Naive thymus-derived CD4-positive, alpha-beta T cell (primary cell): ENCODE measurements at regions of chr6 and their contacts with region 1.

Region 1: DNA sequence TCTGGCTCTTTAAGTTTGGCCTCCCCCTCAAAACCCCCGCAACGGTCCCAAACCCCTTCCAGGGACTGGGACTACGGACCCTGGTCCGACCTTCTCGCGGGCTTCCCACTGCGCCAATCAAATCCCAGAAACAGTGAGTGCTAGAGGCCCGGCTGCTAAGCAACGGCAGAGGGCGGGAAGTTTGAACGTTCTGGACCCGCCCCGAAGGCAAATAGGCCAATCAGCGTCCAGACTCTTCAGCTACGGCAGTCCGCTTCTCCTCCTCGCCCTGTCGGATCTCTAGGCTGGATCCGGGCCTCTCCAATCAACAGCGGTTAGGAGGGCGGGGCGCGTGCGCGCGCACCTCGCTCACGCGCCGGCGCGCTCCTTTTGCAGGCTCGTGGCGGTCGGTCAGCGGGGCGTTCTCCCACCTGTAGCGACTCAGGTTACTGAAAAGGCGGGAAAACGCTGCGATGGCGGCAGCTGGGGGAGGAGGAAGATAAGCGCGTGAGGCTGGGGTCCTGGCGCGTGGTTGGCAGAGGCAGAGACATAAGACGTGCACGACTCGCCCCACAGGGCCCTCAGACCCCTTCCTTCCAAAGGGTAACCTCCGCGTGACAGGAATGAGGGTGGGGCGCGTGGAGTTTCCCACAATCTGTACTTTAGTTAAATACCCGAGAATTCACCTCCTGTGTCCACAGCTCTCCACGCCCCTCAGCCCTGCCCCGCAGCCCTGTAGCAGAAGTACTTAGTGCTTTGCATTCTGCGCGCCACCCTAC is at the start of gene MSH5:
- DNase-seq: peak; percentile 82 to 97 (median 92)
- ATAC-seq: peak; percentile 93
- H3K4me3 ChIP-seq: peak within 1 kb of the TSS; percentile 68
- H3K4me3 Mint-ChIP-seq: peak within 1 kb of the TSS; percentile 86 to 100 (median 98)
- H3K27ac ChIP-seq: peak within 1 kb of the TSS; percentile 69
- H3K27ac Mint-ChIP-seq: peak within 1 kb of the TSS; percentile 83 to 94 (median 90)
- H3K4me1 ChIP-seq: peaks cover 32 to 33% of the 10 kb centered on the region in 2 donors
- H3K4me1 Mint-ChIP-seq: peaks cover 41 to 69% (median 61%) of the 10 kb centered on the region in 7 donors
- H3K27me3 ChIP-seq: no peaks in the 10 kb centered on the region
- H3K27me3 Mint-ChIP-seq: no peaks in the 10 kb centered on the region
- total RNA-seq, gene MSH5: 10.3 to 52.2 (median 11.4) TPM

Region 2: GRCh38 chr6:31485055-31485454 is 254.8 kb before region 1 on chr6:
- CTCF ChIA-PET with region 1: no interaction called
- POLR2A ChIA-PET with region 1: no interaction called
- intact Hi-C with region 1: no loop called
- DNase-seq: no peak
- ATAC-seq: no peak
- H3K4me3 ChIP-seq: no peak overlapping the region
- H3K4me3 Mint-ChIP-seq: no peak overlapping the region
- H3K27ac ChIP-seq: no peak overlapping the region
- H3K27ac Mint-ChIP-seq: no peak overlapping the region
- H3K4me1 ChIP-seq: no peaks in the 10 kb centered on the region
- H3K4me1 Mint-ChIP-seq: peaks cover 0 to 9% (median 0%) of the 10 kb centered on the region in 7 donors
- H3K27me3 ChIP-seq: no peaks in the 10 kb centered on the region
- H3K27me3 Mint-ChIP-seq: no peaks in the 10 kb centered on the region

Region 3: DNA sequence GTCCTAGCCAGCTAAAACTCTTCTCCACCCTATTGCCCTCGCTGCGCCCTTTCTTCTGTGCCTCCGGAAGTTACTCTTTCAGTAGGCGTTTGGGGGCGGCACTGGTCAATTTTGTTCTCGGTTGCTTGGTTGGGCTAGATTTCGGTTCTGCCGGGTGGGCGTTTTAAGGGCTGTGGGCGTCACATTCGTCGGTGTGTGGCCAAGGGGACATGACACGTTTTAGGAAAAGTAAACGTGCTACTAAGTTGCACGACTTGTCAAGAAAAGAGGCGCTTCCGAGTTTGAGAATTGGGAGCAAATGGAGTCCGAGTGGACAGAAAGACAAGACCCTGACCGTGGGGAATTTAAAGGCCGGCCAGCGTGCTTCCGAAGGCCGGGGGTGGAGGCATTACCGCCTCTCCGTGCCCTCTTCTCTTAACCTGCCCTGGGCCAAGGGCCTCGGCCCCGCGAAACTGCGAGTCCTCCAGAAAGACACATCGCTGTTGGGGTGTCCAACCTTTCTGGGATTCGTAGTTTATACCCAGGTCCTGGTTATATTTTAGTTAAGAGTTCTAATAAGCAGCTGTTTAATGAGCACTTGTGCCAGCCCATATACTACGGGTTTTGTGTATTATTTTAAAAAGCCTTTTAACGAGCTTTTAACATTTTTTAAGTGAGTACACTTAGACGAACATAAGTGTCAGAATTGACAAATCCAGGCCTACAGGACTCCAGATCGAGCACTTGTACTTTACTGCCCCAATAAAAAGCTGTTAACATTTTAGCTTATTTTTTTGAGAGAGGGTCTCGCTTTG is 86.7 kb before region 1 on chr6:
- CTCF ChIA-PET with region 1: no interaction called
- POLR2A ChIA-PET with region 1: interaction called, 10 read pairs
- intact Hi-C with region 1: loop called in 1 of 2 experiments (anchors 1 kb)
- DNase-seq: peak in 2 of 9 donors; percentile 81 to 89
- ATAC-seq: peak; percentile 77
- H3K4me3 ChIP-seq: peak overlapping the region; percentile 66
- H3K4me3 Mint-ChIP-seq: peak overlapping the region; percentile 96 to 100 (median 99)
- H3K27ac ChIP-seq: peak overlapping the region; percentile 95
- H3K27ac Mint-ChIP-seq: peak overlapping the region; percentile 99 to 100 (median 100)
- H3K4me1 ChIP-seq: peaks cover 23 to 30% of the 10 kb centered on the region in 2 donors
- H3K4me1 Mint-ChIP-seq: peaks cover 39 to 71% (median 63%) of the 10 kb centered on the region in 7 donors
- H3K27me3 ChIP-seq: no peaks in the 10 kb centered on the region
- H3K27me3 Mint-ChIP-seq: no peaks in the 10 kb centered on the region

Region 4: GRCh38 chr6:31729515-31729978 is 10.3 kb before region 1 on chr6:
- CTCF ChIA-PET with region 1: interaction called, 30 read pairs
- POLR2A ChIA-PET with region 1: interaction called, 4 read pairs
- intact Hi-C with region 1: loop called (anchors 1 kb)
- DNase-seq: peak; percentile 66 to 82 (median 77)
- ATAC-seq: peak; percentile 78
- H3K4me3 ChIP-seq: peak overlapping the region; percentile 92
- H3K4me3 Mint-ChIP-seq: peak overlapping the region; percentile 83 to 100 (median 97)
- H3K27ac ChIP-seq: peak overlapping the region; percentile 65
- H3K27ac Mint-ChIP-seq: peak overlapping the region; percentile 78 to 96 (median 89)
- H3K4me1 ChIP-seq: peaks cover 18 to 20% of the 10 kb centered on the region in 2 donors
- H3K4me1 Mint-ChIP-seq: peaks cover 20 to 65% (median 55%) of the 10 kb centered on the region in 7 donors
- H3K27me3 ChIP-seq: no peaks in the 10 kb centered on the region
- H3K27me3 Mint-ChIP-seq: no peaks in the 10 kb centered on the region

Region 5: GRCh38 chr6:31806465-31807272 is 66.9 kb after region 1 on chr6 and contains the start of gene LSM2:
- CTCF ChIA-PET with region 1: interaction called, 5 read pairs
- POLR2A ChIA-PET with region 1: interaction called, 28 read pairs
- intact Hi-C with region 1: loop called in 1 of 2 experiments (anchors 1 kb)
- DNase-seq: peak; percentile 96 to 98 (median 98)
- ATAC-seq: peak; percentile 100
- H3K4me3 ChIP-seq: peak within 1 kb of the TSS; percentile 92
- H3K4me3 Mint-ChIP-seq: peak within 1 kb of the TSS; percentile 86 to 95 (median 92)
- H3K27ac ChIP-seq: peak within 1 kb of the TSS; percentile 89
- H3K27ac Mint-ChIP-seq: peak within 1 kb of the TSS; percentile 88 to 97 (median 93)
- H3K4me1 ChIP-seq: peaks cover 9 to 14% of the 10 kb centered on the region in 2 donors
- H3K4me1 Mint-ChIP-seq: peaks cover 16 to 47% (median 30%) of the 10 kb centered on the region in 7 donors
- H3K27me3 ChIP-seq: no peaks in the 10 kb centered on the region
- H3K27me3 Mint-ChIP-seq: no peaks in the 10 kb centered on the region
- total RNA-seq, gene LSM2: 22.9 to 94.5 (median 29.2) TPM

Region 6: GRCh38 chr6:31842056-31842455 is 102.2 kb after region 1 on chr6:
- CTCF ChIA-PET with region 1: no interaction called
- POLR2A ChIA-PET with region 1: no interaction called
- intact Hi-C with region 1: no loop called
- DNase-seq: no peak
- ATAC-seq: no peak
- H3K4me3 ChIP-seq: no peak overlapping the region
- H3K4me3 Mint-ChIP-seq: no peak overlapping the region
- H3K27ac ChIP-seq: no peak overlapping the region
- H3K27ac Mint-ChIP-seq: peak overlapping the region in 2 of 9 donors; percentile 29 to 52
- H3K4me1 ChIP-seq: peaks cover 17 to 22% of the 10 kb centered on the region in 2 donors
- H3K4me1 Mint-ChIP-seq: peaks cover 14 to 20% (median 18%) of the 10 kb centered on the region in 7 donors
- H3K27me3 ChIP-seq: no peaks in the 10 kb centered on the region
- H3K27me3 Mint-ChIP-seq: no peaks in the 10 kb centered on the region

Region 7: GRCh38 chr6:31901953-31902643 is 162.3 kb after region 1 on chr6 and contains the start of gene ZBTB12:
- CTCF ChIA-PET with region 1: no interaction called
- POLR2A ChIA-PET with region 1: no interaction called
- intact Hi-C with region 1: loop called in 1 of 2 experiments (anchors 2 kb)
- DNase-seq: peak; percentile 76 to 90 (median 84)
- ATAC-seq: peak; percentile 76
- H3K4me3 ChIP-seq: peak within 1 kb of the TSS; percentile 80
- H3K4me3 Mint-ChIP-seq: peak within 1 kb of the TSS; percentile 81 to 96 (median 88)
- H3K27ac ChIP-seq: peak within 1 kb of the TSS; percentile 83
- H3K27ac Mint-ChIP-seq: peak within 1 kb of the TSS; percentile 75 to 94 (median 86)
- H3K4me1 ChIP-seq: peaks cover 12 to 16% of the 10 kb centered on the region in 2 donors
- H3K4me1 Mint-ChIP-seq: peaks cover 18 to 34% (median 32%) of the 10 kb centered on the region in 7 donors
- H3K27me3 ChIP-seq: no peaks in the 10 kb centered on the region
- H3K27me3 Mint-ChIP-seq: peaks cover 0 to 11% (median 0%) of the 10 kb centered on the region in 5 donors
- total RNA-seq, gene ZBTB12: 0.77 to 4.5 (median 2.5) TPM

Region 8: GRCh38 chr6:32070814-32071543 is 331.2 kb after region 1 on chr6:
- CTCF ChIA-PET with region 1: no interaction called
- POLR2A ChIA-PET with region 1: no interaction called
- intact Hi-C with region 1: no loop called
- DNase-seq: no peak
- ATAC-seq: no peak
- H3K4me3 ChIP-seq: no peak overlapping the region
- H3K4me3 Mint-ChIP-seq: no peak overlapping the region
- H3K27ac ChIP-seq: no peak overlapping the region
- H3K27ac Mint-ChIP-seq: no peak overlapping the region
- H3K4me1 ChIP-seq: no peaks in the 10 kb centered on the region
- H3K4me1 Mint-ChIP-seq: peaks cover 0 to 3% (median 0%) of the 10 kb centered on the region in 7 donors
- H3K27me3 ChIP-seq: no peaks in the 10 kb centered on the region
- H3K27me3 Mint-ChIP-seq: peaks cover 0 to 11% (median 0%) of the 10 kb centered on the region in 5 donors

Region 9: DNA sequence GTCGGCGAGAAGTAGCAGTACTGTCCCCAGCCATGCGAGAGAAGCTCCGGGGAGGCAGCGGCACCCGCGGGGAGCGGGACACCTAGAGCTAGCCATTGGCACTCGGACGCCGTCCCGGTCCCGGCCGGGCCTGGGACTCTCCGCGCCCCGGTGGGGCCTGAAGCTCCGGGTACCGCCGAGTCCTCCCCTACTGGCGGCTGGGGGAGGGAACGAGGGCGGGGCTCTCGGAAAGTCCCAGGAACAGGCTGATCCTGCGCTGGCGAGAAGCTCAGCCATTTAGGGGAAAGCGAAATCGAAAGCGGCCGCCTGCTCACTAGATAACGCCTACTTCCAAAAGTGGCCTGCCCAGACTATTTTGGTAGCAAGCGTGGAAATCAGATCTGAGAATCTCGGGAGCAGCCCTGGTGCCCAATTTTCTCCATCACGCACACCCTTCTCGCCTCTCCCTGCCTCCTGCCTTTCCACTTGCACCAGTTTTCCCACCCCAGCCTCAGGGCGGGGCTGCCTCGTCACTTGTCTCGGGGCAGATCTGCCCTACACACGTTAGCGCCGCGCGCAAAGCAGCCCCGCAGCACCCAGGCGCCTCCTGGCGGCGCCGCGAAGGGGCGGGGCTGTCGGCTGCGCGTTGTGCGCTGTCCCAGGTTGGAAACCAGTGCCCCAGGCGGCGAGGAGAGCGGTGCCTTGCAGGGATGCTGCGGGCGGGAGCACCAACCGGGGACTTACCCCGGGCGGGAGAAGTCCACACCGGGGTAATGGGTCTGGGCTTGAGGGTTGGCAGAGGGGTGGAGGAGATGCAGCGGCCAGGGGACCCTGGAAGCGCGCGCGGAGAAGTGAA is 1113.9 kb after region 1 on chr6 and contains the starts of genes PSMB9 and TAP1:
- CTCF ChIA-PET with region 1: no interaction called
- POLR2A ChIA-PET with region 1: no interaction called
- intact Hi-C with region 1: loop called in 1 of 2 experiments (anchors 5 kb)
- DNase-seq: peak; percentile 92 to 97 (median 94)
- ATAC-seq: peak; percentile 92
- H3K4me3 ChIP-seq: peak within 1 kb of the TSS; percentile 91
- H3K4me3 Mint-ChIP-seq: peak within 1 kb of the TSS; percentile 96 to 100 (median 100)
- H3K27ac ChIP-seq: peak within 1 kb of the TSS; percentile 100
- H3K27ac Mint-ChIP-seq: peak within 1 kb of the TSS; percentile 97 to 100 (median 100)
- H3K4me1 ChIP-seq: peaks cover 45 to 57% of the 10 kb centered on the region in 2 donors
- H3K4me1 Mint-ChIP-seq: peaks cover 61 to 80% (median 72%) of the 10 kb centered on the region in 7 donors
- H3K27me3 ChIP-seq: no peaks in the 10 kb centered on the region
- H3K27me3 Mint-ChIP-seq: no peaks in the 10 kb centered on the region
- total RNA-seq, gene PSMB9: 70.3 to 452 (median 90.5) TPM
- total RNA-seq, gene TAP1: 92.1 to 500 (median 103) TPM